CD4-positive, alpha-beta T cell (primary cell): ENCODE measurements at regions of chr18 and their contacts with region 1.

Region 1: GRCh38 chr18:44537521-44537920 is 143.2 kb upstream of the SETBP1 start:
- DNase-seq: no peak
- ATAC-seq: no peak
- H3K4me3 ChIP-seq: no peak overlapping the region
- H3K4me3 Mint-ChIP-seq: no peak overlapping the region
- H3K27ac ChIP-seq: no peak overlapping the region
- H3K27ac Mint-ChIP-seq: no peak overlapping the region
- H3K4me1 ChIP-seq: no peaks in the 10 kb centered on the region
- H3K4me1 Mint-ChIP-seq: no peaks in the 10 kb centered on the region
- H3K27me3 ChIP-seq: no peaks in the 10 kb centered on the region
- H3K27me3 Mint-ChIP-seq: no peaks in the 10 kb centered on the region
- CTCF ChIP-seq: no peak

Region 2: DNA sequence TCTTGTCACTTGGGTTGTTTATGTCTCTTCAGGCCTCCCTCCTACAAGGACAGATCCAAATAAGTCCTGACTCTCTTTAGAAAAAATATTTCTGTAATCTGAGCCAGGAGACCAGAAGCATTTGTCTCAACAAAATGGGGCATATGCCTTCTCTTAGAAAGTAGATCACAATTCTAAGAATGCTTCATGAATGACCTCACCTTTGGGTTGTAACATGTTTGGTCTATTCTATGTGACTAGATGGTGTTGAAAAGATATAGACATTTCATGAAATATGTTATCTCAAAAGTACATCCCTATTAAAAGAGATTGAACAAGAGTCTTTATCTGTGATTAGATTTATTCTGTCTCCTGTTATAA is 15.9 kb before region 1 on chr18:
- CTCF ChIA-PET with region 1: no interaction called
- POLR2A ChIA-PET with region 1: no interaction called
- intact Hi-C with region 1: loop called in 1 of 2 experiments (anchors 1 kb)
- DNase-seq: no peak
- ATAC-seq: no peak
- H3K4me3 ChIP-seq: no peak overlapping the region
- H3K4me3 Mint-ChIP-seq: no peak overlapping the region
- H3K27ac ChIP-seq: no peak overlapping the region
- H3K27ac Mint-ChIP-seq: no peak overlapping the region
- H3K4me1 ChIP-seq: no peaks in the 10 kb centered on the region
- H3K4me1 Mint-ChIP-seq: peaks cover 6% of the 10 kb centered on the region
- H3K27me3 ChIP-seq: no peaks in the 10 kb centered on the region
- H3K27me3 Mint-ChIP-seq: no peaks in the 10 kb centered on the region
- CTCF ChIP-seq: no peak

Region 3: DNA sequence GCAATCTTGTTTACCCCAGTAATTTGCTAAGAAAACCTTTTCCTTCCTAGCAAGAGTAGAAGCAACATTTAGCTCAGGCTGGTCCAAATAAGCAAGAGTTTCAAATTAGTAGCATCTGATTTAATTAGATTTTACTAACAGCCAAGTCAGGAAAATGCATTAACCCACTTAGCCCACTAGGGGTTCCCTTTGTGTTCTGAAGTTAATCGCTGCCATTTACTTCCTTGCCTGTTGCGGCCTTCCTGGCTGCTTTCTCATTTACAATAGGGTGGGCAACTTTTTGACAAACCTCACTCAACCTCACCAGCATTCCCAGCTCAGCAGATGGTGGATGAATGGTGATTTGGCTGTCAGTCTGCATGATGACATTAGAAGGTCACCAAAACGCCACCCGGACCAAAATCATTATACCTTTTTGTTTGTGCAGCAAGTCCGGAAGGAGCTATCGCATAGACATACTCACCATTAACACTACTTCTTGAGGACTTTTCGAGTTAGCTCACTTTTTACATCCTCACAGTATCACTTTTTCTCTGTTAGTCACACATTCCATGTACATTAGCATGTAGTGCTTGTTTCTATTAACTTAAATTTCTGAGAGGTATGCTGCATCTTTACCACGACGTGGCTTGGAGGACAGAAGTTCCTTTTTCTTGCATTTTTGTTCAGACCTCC is 41.6 kb after region 1 on chr18:
- CTCF ChIA-PET with region 1: no interaction called
- POLR2A ChIA-PET with region 1: no interaction called
- intact Hi-C with region 1: no loop called
- DNase-seq: peak in 3 of 14 experiments; percentile 2 to 24 (median 8)
- ATAC-seq: no peak
- H3K4me3 ChIP-seq: no peak overlapping the region
- H3K4me3 Mint-ChIP-seq: no peak overlapping the region
- H3K27ac ChIP-seq: no peak overlapping the region
- H3K27ac Mint-ChIP-seq: no peak overlapping the region
- H3K4me1 ChIP-seq: no peaks in the 10 kb centered on the region
- H3K4me1 Mint-ChIP-seq: peaks cover 5% of the 10 kb centered on the region
- H3K27me3 ChIP-seq: no peaks in the 10 kb centered on the region
- H3K27me3 Mint-ChIP-seq: no peaks in the 10 kb centered on the region
- CTCF ChIP-seq: peak; percentile 26